Transverse colon (tissue), 4 donors: ENCODE measurements at regions of chr5 and their contacts with region 1.

Region 1: GRCh38 chr5:175444060-175444904 is at the start of gene DRD1:
- DNase-seq: peak; percentile 26
- H3K4me3 ChIP-seq: peak within 1 kb of the TSS in 2 of 4 donors; percentile 26 to 43
- H3K27ac ChIP-seq: peak within 1 kb of the TSS in 1 of 4 donors; percentile 2
- H3K4me1 ChIP-seq: peaks cover 0 to 10% (median 8%) of the 10 kb centered on the region in 4 donors
- H3K27me3 ChIP-seq: peaks cover 46% of the 10 kb centered on the region
- CTCF ChIP-seq: peak in 4 of 5 experiments; percentile 56 to 77 (median 62)
- EP300 ChIP-seq: no peak
- POLR2A ChIP-seq: no peak
- total RNA-seq, gene DRD1: 0.16 TPM in 1 of 4 donors, not detected in the others

Region 2: DNA sequence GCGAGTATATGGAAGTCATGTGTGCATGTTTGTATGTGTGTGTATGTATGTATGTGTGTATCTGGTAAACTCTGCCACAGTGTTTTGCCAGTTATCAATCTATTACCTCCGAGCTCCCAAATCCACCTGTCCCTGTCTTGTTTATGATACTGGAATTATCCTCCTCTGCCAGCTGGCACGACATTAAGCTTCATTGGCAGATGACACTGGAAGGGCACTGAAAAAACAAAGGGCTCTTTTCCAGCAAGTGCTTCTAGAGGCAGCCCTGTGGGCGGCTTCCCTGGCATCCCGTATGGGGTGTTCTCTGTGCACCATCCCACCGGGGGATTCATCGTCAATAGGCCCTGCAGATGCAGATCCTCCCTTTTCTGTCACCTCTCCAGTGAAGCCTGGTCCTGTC is 498.4 kb before region 1 on chr5:
- in situ Hi-C with region 1: loop called (anchors 5 to 10 kb)
- intact Hi-C with region 1: loop called (anchors 5 kb)
- DNase-seq: no peak
- H3K4me3 ChIP-seq: no peak overlapping the region
- H3K27ac ChIP-seq: no peak overlapping the region
- H3K4me1 ChIP-seq: no peaks in the 10 kb centered on the region
- H3K27me3 ChIP-seq: no peaks in the 10 kb centered on the region
- CTCF ChIP-seq: no peak
- EP300 ChIP-seq: no peak
- POLR2A ChIP-seq: no peak

Region 3: GRCh38 chr5:174951146-174951780 is 493.0 kb before region 1 on chr5:
- in situ Hi-C with region 1: loop called (anchors 5 to 10 kb)
- intact Hi-C with region 1: loop called (anchors 5 kb)
- DNase-seq: peak; percentile 40
- H3K4me3 ChIP-seq: no peak overlapping the region
- H3K27ac ChIP-seq: no peak overlapping the region
- H3K4me1 ChIP-seq: no peaks in the 10 kb centered on the region
- H3K27me3 ChIP-seq: no peaks in the 10 kb centered on the region
- CTCF ChIP-seq: peak; percentile 71 to 77 (median 74)
- EP300 ChIP-seq: no peak
- POLR2A ChIP-seq: no peak

Region 4: DNA sequence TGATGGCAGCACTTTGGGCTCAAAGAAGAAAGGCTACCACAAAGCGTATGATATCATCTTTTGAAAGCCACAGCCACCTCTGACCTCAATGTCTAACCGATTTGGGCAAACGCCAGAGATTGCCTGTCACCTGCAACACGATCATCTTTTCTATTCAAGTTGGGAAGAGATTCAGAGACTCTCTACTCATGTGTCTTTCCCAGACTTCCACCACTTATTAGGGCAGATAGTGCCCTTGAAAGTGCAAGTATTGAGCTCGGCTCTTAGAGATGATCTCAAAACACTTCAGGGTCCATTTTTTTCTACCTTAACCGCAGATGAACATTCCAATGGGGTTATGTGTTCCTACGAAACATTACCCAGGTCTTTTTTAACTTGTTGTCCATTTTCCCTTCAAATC is 214.0 kb before region 1 on chr5:
- in situ Hi-C with region 1: no loop called
- intact Hi-C with region 1: no loop called
- DNase-seq: no peak
- H3K4me3 ChIP-seq: no peak overlapping the region
- H3K27ac ChIP-seq: no peak overlapping the region
- H3K4me1 ChIP-seq: no peaks in the 10 kb centered on the region
- H3K27me3 ChIP-seq: no peaks in the 10 kb centered on the region
- CTCF ChIP-seq: no peak
- EP300 ChIP-seq: no peak
- POLR2A ChIP-seq: no peak